ENCODE measurements at regions of chr19 and their contacts with region 1.

Region 1: DNA sequence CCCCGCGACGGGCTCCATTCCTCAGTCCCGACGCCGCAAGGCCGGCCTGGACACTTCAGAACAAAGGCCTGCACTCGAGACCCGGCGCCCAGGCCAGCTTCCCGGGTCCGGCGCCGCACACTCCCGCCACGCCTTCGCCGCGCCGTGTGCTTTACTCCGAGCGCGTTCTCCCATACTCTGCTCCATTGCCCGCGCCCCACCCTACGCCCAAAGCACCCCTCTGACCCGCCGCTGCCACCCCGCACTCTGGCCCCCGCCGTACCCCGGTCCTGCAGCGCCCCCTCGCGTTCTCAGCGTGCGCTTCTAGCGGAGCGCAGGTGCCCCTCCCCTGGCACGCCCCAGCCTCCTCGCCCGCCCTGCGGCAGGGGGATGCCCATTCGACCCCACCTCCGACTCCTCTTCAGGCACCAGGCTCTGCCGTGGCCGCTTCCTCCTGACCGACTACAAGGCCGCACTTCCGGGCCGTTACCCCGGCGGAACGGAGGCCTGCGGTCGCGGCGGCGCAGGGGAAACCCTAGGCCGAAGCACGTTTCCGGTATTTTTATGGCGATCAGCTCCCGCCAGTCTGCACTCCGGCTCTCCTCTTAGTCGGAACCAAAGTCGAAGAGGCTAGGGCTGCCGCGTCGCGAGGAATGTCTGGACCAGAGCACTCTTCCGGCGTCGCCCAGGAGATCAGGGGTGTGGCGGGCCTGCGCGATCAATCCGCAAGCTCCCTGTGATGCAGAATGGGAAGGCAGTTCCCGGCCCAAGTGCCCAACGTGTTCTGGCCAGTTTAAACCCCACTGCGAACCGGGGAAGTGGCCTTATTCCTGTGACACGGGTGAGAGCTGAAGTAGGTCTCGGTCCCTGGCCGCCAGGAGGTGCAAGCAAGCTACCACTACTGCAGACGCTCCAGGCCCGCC is at the start of gene ZBTB45:
- DNase-seq: peak; percentile 93
- ATAC-seq: peak; percentile 82
- H3K4me3 Mint-ChIP-seq: peak within 1 kb of the TSS; percentile 88
- H3K27ac Mint-ChIP-seq: peak within 1 kb of the TSS; percentile 96
- H3K4me1 Mint-ChIP-seq: peaks cover 37% of the 10 kb centered on the region
- H3K27me3 Mint-ChIP-seq: no peaks in the 10 kb centered on the region
- CTCF ChIP-seq: peak; percentile 78
- total RNA-seq, gene ZBTB45: 7.4 to 7.9 TPM

Region 2: GRCh38 chr19:58362272-58362994 is 157.2 kb before region 1 on chr19 and contains the start of gene ZNF497:
- CTCF ChIA-PET with region 1: interaction called, 13 read pairs
- POLR2A ChIA-PET with region 1: interaction called, 8 read pairs
- intact Hi-C with region 1: no loop called
- DNase-seq: peak; percentile 99
- ATAC-seq: peak; percentile 88
- H3K4me3 Mint-ChIP-seq: peak within 1 kb of the TSS; percentile 96
- H3K27ac Mint-ChIP-seq: peak within 1 kb of the TSS; percentile 97
- H3K4me1 Mint-ChIP-seq: peaks cover 18% of the 10 kb centered on the region
- H3K27me3 Mint-ChIP-seq: no peaks in the 10 kb centered on the region
- CTCF ChIP-seq: no peak
- total RNA-seq, gene ZNF497: 1.3 to 1.6 TPM

Region 3: DNA sequence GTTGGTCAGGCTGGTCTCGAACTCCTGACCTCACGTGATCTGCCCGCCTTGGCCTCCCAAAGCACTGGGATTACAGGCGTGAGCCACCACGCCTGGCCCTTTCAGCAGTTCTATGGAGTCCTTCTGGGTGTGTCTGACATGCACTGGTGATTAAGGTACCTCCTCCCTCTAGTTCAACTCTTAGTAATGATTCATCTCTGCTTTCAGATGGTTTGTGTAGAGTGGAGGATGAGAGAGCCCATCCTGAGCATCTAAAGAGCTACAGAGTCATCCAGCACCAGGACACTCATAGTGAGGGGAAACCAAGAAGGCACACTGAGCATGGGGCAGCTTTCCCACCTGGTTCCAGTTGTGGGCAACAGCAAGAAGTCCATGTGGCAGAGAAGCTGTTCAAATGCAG is 103.0 kb before region 1 on chr19:
- CTCF ChIA-PET with region 1: no interaction called
- POLR2A ChIA-PET with region 1: no interaction called
- intact Hi-C with region 1: no loop called
- DNase-seq: no peak
- ATAC-seq: no peak
- H3K4me3 Mint-ChIP-seq: no peak overlapping the region
- H3K27ac Mint-ChIP-seq: no peak overlapping the region
- H3K4me1 Mint-ChIP-seq: peaks cover 4% of the 10 kb centered on the region
- H3K27me3 Mint-ChIP-seq: no peaks in the 10 kb centered on the region
- CTCF ChIP-seq: no peak

Region 4: GRCh38 chr19:58475714-58476497 is 43.7 kb before region 1 on chr19 and contains the start of gene ZNF446:
- CTCF ChIA-PET with region 1: interaction called, 7 read pairs
- POLR2A ChIA-PET with region 1: interaction called, 11 read pairs
- intact Hi-C with region 1: no loop called
- DNase-seq: peak; percentile 98
- ATAC-seq: peak; percentile 87
- H3K4me3 Mint-ChIP-seq: peak within 1 kb of the TSS; percentile 82
- H3K27ac Mint-ChIP-seq: peak within 1 kb of the TSS; percentile 98
- H3K4me1 Mint-ChIP-seq: peaks cover 32% of the 10 kb centered on the region
- H3K27me3 Mint-ChIP-seq: no peaks in the 10 kb centered on the region
- CTCF ChIP-seq: no peak
- total RNA-seq, gene ZNF446: 3.5 to 4.0 TPM

Region 5: GRCh38 chr19:58538257-58539168 is 18.9 kb after region 1 on chr19:
- CTCF ChIA-PET with region 1: interaction called, 16 read pairs
- POLR2A ChIA-PET with region 1: interaction called, 164 read pairs
- intact Hi-C with region 1: no loop called
- DNase-seq: peak; percentile 75
- ATAC-seq: peak; percentile 93
- H3K4me3 Mint-ChIP-seq: peak overlapping the region; percentile 76
- H3K27ac Mint-ChIP-seq: peak overlapping the region; percentile 78
- H3K4me1 Mint-ChIP-seq: peaks cover 9% of the 10 kb centered on the region
- H3K27me3 Mint-ChIP-seq: peaks cover 16% of the 10 kb centered on the region
- CTCF ChIP-seq: no peak

Region 6: DNA sequence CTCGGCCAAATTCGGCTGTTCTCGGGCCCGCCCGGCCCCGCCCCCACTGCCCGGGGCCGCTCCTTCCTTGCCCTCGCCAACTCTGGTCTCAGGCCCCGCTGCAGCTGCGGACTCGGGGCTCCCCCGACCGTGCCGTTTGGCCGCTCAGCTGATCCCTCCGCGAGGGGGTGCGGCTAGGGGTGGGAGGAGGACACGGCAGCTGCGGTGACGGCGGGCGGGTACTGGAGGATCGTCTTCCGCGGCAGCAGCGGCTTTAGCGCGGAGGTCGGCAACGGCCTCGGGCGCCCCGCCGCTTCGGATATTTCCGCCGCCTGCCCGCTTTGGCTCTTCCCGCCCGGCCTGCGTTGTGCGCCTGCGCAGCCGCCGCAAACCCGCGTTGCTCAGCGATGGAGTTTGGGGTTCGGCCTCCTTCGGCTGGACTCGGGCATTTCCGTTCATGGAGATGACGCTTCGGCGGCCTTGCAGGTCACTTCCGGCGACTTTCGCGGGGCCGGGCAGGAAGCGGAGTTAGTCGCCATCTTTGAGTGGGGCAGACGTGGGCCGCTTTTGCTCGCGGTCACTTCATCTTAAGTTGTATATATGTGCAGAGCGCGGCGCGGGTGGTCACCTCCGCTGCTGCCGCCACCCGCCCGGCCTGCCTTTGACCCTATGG is 39.1 kb after region 1 on chr19:
- CTCF ChIA-PET with region 1: interaction called, 19 read pairs
- POLR2A ChIA-PET with region 1: interaction called, 164 read pairs
- intact Hi-C with region 1: no loop called
- DNase-seq: peak; percentile 100
- ATAC-seq: peak; percentile 69
- H3K4me3 Mint-ChIP-seq: peak overlapping the region; percentile 98
- H3K27ac Mint-ChIP-seq: peak overlapping the region; percentile 99
- H3K4me1 Mint-ChIP-seq: peaks cover 53% of the 10 kb centered on the region
- H3K27me3 Mint-ChIP-seq: no peaks in the 10 kb centered on the region
- CTCF ChIP-seq: no peak

Region 7: DNA sequence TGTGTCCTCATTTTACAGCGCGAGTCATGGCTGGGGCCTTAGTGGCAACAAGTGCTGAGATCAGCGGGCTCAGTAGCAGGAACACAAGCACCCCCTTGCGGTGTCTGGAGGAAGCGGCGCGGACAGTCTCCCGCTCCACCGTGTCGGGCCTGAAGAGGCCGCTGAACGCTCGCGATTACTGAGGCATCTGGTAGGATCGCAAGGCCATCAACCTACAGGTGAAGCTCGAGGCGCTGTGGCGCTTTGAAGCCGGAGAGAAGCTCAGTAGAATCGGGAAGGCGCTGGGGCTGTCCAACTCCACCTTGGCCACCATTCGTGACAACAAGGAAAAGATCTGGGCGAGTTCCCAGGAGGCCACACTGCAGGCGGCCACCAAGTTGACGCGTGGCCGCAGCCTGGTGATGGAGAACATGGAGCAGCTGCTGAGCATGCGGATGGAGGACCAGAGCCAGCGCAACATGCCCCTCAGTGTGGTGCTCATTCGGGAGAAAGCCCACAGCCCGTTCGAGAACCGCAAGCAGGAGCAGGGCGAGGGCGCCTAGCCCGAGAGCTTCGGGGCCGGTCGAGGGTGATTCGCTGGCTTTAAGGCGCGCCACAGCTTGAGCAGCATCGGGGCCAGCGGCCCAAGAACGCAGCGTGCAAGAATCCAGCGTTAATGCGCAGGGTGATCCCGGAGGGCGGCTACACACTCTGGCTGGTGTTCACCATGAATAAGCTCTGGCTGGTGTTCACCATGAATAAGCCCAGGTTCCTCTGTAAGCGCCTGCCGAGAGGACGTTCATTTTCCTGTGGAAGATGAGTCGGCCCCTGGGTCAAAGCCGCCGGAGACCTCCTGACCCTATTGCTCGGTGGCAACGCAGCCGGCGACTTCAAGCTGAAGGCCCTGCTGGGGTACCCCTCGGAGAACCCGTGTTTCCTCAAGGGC is 61.9 kb after region 1 on chr19:
- CTCF ChIA-PET with region 1: interaction called, 131 read pairs
- POLR2A ChIA-PET with region 1: interaction called, 19 read pairs
- intact Hi-C with region 1: no loop called
- DNase-seq: peak; percentile 96
- ATAC-seq: peak; percentile 100
- H3K4me3 Mint-ChIP-seq: no peak overlapping the region
- H3K27ac Mint-ChIP-seq: peak overlapping the region; percentile 84
- H3K4me1 Mint-ChIP-seq: peaks cover 33% of the 10 kb centered on the region
- H3K27me3 Mint-ChIP-seq: no peaks in the 10 kb centered on the region
- CTCF ChIP-seq: peak; percentile 97